B cell (primary cell): ENCODE measurements at regions of chr1 and their contacts with region 1.

Region 1: GRCh38 chr1:66331657-66332547 is 202.1 kb upstream of the SGIP1 start:
- DNase-seq: peak; percentile 62
- ATAC-seq: peak; percentile 3
- H3K4me3 ChIP-seq: peak overlapping the region; percentile 69 to 100 (median 90)
- H3K4me3 Mint-ChIP-seq: peak overlapping the region; percentile 99
- H3K27ac ChIP-seq: peak overlapping the region; percentile 94 to 98
- H3K27ac Mint-ChIP-seq: peak overlapping the region; percentile 97
- H3K4me1 ChIP-seq: peaks cover 45 to 58% of the 10 kb centered on the region in 2 donors
- H3K4me1 Mint-ChIP-seq: peaks cover 56% of the 10 kb centered on the region
- H3K27me3 ChIP-seq: no peaks in the 10 kb centered on the region
- H3K27me3 Mint-ChIP-seq: no peaks in the 10 kb centered on the region
- CTCF ChIP-seq: no peak

Region 2: GRCh38 chr1:65419681-65420589 is 912.0 kb before region 1 on chr1:
- CTCF ChIA-PET with region 1: no interaction called
- POLR2A ChIA-PET with region 1: no interaction called
- intact Hi-C with region 1: loop called (anchors 2 kb)
- DNase-seq: peak; percentile 99
- ATAC-seq: peak; percentile 91
- H3K4me3 ChIP-seq: peak overlapping the region; percentile 66 to 97 (median 92)
- H3K4me3 Mint-ChIP-seq: no peak overlapping the region
- H3K27ac ChIP-seq: peak overlapping the region; percentile 66 to 75
- H3K27ac Mint-ChIP-seq: no peak overlapping the region
- H3K4me1 ChIP-seq: peaks cover 14 to 23% of the 10 kb centered on the region in 2 donors
- H3K4me1 Mint-ChIP-seq: peaks cover 16% of the 10 kb centered on the region
- H3K27me3 ChIP-seq: peaks cover 0 to 8% (median 5%) of the 10 kb centered on the region in 4 experiments
- H3K27me3 Mint-ChIP-seq: peaks cover 15% of the 10 kb centered on the region
- CTCF ChIP-seq: no peak

Region 3: GRCh38 chr1:66282343-66282852 is 49.5 kb before region 1 on chr1:
- CTCF ChIA-PET with region 1: interaction called, 28 read pairs
- POLR2A ChIA-PET with region 1: interaction called, 11 read pairs
- intact Hi-C with region 1: loop called (anchors 1 kb)
- DNase-seq: peak; percentile 94
- ATAC-seq: peak; percentile 91
- H3K4me3 ChIP-seq: peak overlapping the region in 2 of 5 experiments; percentile 10 to 39
- H3K4me3 Mint-ChIP-seq: peak overlapping the region; percentile 80
- H3K27ac ChIP-seq: peak overlapping the region; percentile 86 to 88
- H3K27ac Mint-ChIP-seq: peak overlapping the region; percentile 92
- H3K4me1 ChIP-seq: peaks cover 62 to 67% of the 10 kb centered on the region in 2 donors
- H3K4me1 Mint-ChIP-seq: peaks cover 79% of the 10 kb centered on the region
- H3K27me3 ChIP-seq: no peaks in the 10 kb centered on the region
- H3K27me3 Mint-ChIP-seq: no peaks in the 10 kb centered on the region
- CTCF ChIP-seq: peak; percentile 44

Region 4: DNA sequence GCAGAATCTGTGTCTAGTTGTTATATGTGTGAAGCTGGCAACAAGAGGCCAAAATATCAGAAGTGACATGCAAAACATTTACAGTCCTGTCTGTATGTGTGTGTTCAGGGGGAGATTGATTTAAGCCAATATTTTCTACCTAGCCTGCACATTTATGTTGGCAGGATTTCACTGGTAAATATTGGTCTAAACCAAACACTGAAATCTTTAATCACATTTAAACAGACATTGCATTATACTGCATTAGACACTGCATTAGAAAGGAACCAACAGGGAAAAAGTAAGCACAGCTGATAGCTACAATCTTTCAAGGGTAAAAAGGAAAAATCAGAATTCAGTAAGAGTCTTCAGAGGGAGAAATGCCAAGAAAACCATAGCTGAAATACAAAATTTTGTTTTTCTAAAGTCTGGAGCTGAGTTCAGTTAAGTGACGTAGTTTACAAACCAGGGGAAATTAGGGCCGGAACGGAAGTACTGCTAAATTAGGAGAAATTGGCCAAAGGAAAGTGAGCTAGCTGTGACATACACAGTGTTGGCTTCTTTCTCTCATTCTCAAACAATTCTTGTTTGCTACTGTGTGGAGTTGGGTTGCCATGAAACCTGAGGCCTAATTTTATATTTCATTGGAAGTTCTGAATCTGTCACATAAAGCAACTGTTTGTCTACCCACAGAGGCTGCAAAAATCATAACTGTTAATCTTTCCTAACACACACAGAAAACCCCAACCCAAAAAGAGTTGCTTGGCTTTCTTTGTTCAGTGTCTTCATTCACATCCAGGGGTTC is 15.2 kb before region 1 on chr1:
- CTCF ChIA-PET with region 1: interaction called, 4 read pairs
- POLR2A ChIA-PET with region 1: interaction called, 3 read pairs
- intact Hi-C with region 1: loop called (anchors 2 kb)
- DNase-seq: peak; percentile 38
- ATAC-seq: peak; percentile 36
- H3K4me3 ChIP-seq: no peak overlapping the region
- H3K4me3 Mint-ChIP-seq: peak overlapping the region; percentile 13
- H3K27ac ChIP-seq: no peak overlapping the region
- H3K27ac Mint-ChIP-seq: peak overlapping the region; percentile 21
- H3K4me1 ChIP-seq: peaks cover 8 to 13% of the 10 kb centered on the region in 2 donors
- H3K4me1 Mint-ChIP-seq: peaks cover 12% of the 10 kb centered on the region
- H3K27me3 ChIP-seq: no peaks in the 10 kb centered on the region
- H3K27me3 Mint-ChIP-seq: no peaks in the 10 kb centered on the region
- CTCF ChIP-seq: no peak

Region 5: GRCh38 chr1:66360285-66360724 is 28.4 kb after region 1 on chr1:
- CTCF ChIA-PET with region 1: interaction called, 11 read pairs
- POLR2A ChIA-PET with region 1: no interaction called
- intact Hi-C with region 1: no loop called
- DNase-seq: peak; percentile 38
- ATAC-seq: peak; percentile 61
- H3K4me3 ChIP-seq: no peak overlapping the region
- H3K4me3 Mint-ChIP-seq: peak overlapping the region; percentile 78
- H3K27ac ChIP-seq: peak overlapping the region in 1 of 2 donors; percentile 78
- H3K27ac Mint-ChIP-seq: peak overlapping the region; percentile 82
- H3K4me1 ChIP-seq: peaks cover 34 to 35% of the 10 kb centered on the region in 2 donors
- H3K4me1 Mint-ChIP-seq: peaks cover 84% of the 10 kb centered on the region
- H3K27me3 ChIP-seq: no peaks in the 10 kb centered on the region
- H3K27me3 Mint-ChIP-seq: no peaks in the 10 kb centered on the region
- CTCF ChIP-seq: peak; percentile 56

Region 6: GRCh38 chr1:66380452-66381212 is 48.7 kb after region 1 on chr1:
- CTCF ChIA-PET with region 1: interaction called, 14 read pairs
- POLR2A ChIA-PET with region 1: interaction called, 11 read pairs
- intact Hi-C with region 1: loop called (anchors 1 kb)
- DNase-seq: peak; percentile 91
- ATAC-seq: peak; percentile 99
- H3K4me3 ChIP-seq: peak overlapping the region in 2 of 5 experiments; percentile 13 to 39
- H3K4me3 Mint-ChIP-seq: peak overlapping the region; percentile 74
- H3K27ac ChIP-seq: peak overlapping the region; percentile 67 to 83
- H3K27ac Mint-ChIP-seq: peak overlapping the region; percentile 85
- H3K4me1 ChIP-seq: peaks cover 67 to 68% of the 10 kb centered on the region in 2 donors
- H3K4me1 Mint-ChIP-seq: peaks cover 75% of the 10 kb centered on the region
- H3K27me3 ChIP-seq: no peaks in the 10 kb centered on the region
- H3K27me3 Mint-ChIP-seq: no peaks in the 10 kb centered on the region
- CTCF ChIP-seq: no peak

Region 7: GRCh38 chr1:66924756-66925557 is 593.1 kb after region 1 on chr1 and contains the starts of genes DNAI4 and MIER1:
- CTCF ChIA-PET with region 1: no interaction called
- POLR2A ChIA-PET with region 1: no interaction called
- intact Hi-C with region 1: loop called (anchors 10 kb)
- DNase-seq: peak; percentile 99
- ATAC-seq: peak; percentile 94
- H3K4me3 ChIP-seq: peak within 1 kb of the TSS; percentile 66 to 93 (median 84)
- H3K4me3 Mint-ChIP-seq: peak within 1 kb of the TSS; percentile 91
- H3K27ac ChIP-seq: peak within 1 kb of the TSS; percentile 91 to 99
- H3K27ac Mint-ChIP-seq: peak within 1 kb of the TSS; percentile 92
- H3K4me1 ChIP-seq: peaks cover 21 to 23% of the 10 kb centered on the region in 2 donors
- H3K4me1 Mint-ChIP-seq: peaks cover 29% of the 10 kb centered on the region
- H3K27me3 ChIP-seq: no peaks in the 10 kb centered on the region
- H3K27me3 Mint-ChIP-seq: no peaks in the 10 kb centered on the region
- CTCF ChIP-seq: peak; percentile 42
- total RNA-seq, gene DNAI4: 2.7 and 4.3 TPM in 2 replicates
- total RNA-seq, gene MIER1: 55.0 and 56.5 TPM in 2 replicates